Panc1 (cell line): ENCODE measurements at regions of chr12 and their contacts with region 1.

Region 1: GRCh38 chr12:124539084-124540041 is 28.0 kb downstream of the NCOR2 start:
- DNase-seq: no peak
- ATAC-seq: peak; percentile 5
- H3K4me3 ChIP-seq: no peak overlapping the region
- H3K27ac ChIP-seq: peak overlapping the region; percentile 94
- H3K4me1 ChIP-seq: peaks cover 81% of the 10 kb centered on the region
- H3K27me3 ChIP-seq: no peaks in the 10 kb centered on the region
- CTCF ChIP-seq: no peak

Region 2: DNA sequence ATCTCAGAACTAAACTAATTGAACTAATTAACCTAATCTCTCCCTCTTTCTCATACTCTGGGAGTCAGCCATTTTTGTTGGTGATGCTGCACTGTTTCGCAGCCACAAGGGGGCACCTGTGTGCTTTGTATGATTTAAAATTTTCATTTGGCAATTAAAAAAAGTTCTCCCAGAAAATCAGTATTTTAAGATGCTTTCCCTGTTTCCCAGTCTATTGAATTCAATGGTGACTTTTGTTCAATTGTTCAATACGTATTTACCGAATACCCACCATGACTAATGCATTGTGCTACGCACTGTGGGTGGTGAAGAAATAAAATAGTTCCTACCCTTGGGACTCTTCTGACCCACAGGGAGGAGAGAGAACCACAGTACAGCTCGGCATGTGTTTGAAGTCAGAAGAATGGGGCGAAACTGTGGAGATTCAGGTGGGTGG is 502.7 kb before region 1 on chr12:
- CTCF ChIA-PET with region 1: interaction called, 12 read pairs
- POLR2A ChIA-PET with region 1: no interaction called
- in situ Hi-C with region 1: no loop called
- intact Hi-C with region 1: no loop called
- DNase-seq: peak; percentile 24
- ATAC-seq: peak; percentile 79
- H3K4me3 ChIP-seq: no peak overlapping the region
- H3K27ac ChIP-seq: peak overlapping the region; percentile 60
- H3K4me1 ChIP-seq: peaks cover 4% of the 10 kb centered on the region
- H3K27me3 ChIP-seq: no peaks in the 10 kb centered on the region
- CTCF ChIP-seq: peak; percentile 90

Region 3: GRCh38 chr12:124551268-124552144 is 12.1 kb after region 1 on chr12:
- CTCF ChIA-PET with region 1: interaction called, 5 read pairs
- POLR2A ChIA-PET with region 1: interaction called, 10 read pairs
- in situ Hi-C with region 1: no loop called
- intact Hi-C with region 1: no loop called
- DNase-seq: no peak
- ATAC-seq: peak; percentile 42; the same call in 1 of the 2 replicates
- H3K4me3 ChIP-seq: peak overlapping the region in 1 of 2 experiments; percentile 21; a peak in 2 of 4 replicates
- H3K27ac ChIP-seq: peak overlapping the region; percentile 98
- H3K4me1 ChIP-seq: peaks cover 98% of the 10 kb centered on the region
- H3K27me3 ChIP-seq: no peaks in the 10 kb centered on the region
- CTCF ChIP-seq: no peak

Region 4: DNA sequence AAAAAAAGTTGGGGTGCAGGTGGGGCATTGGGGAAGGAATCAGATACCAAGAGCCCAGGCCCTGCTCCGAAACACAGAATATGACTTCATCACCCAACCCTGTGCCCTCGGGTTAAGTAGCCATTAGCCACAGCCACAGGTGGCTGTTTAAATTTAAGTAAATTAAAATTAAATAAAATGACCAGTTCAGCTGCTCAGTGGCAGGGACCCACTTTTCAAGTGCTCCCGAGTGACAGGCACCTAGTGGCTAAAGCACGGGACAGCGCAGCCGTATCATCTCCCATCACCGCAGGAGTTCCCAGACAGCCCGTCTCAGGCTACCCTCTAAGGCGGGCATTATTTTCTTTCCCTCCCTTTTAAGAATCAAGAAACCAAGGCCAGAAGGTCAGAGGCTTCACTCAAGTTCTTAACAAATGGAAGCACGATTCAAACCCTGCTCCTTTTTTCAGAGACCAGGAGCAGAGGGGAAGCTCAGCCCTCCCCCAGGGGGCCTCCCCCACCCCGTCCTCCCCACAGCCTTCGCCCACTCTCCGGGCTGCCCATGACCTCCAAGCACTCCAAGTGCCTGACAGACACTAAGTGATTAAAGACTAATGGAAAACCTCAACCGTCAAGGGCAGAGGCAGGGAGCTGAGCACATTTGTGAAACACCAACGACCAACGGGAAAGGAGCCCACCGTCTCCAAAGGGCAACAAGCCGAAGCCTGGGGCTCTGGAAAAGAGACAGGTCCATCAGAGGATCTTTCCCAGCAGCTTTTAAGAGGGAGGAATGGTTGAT is 22.8 kb after region 1 on chr12:
- CTCF ChIA-PET with region 1: no interaction called
- POLR2A ChIA-PET with region 1: interaction called, 17 read pairs
- in situ Hi-C with region 1: no loop called
- intact Hi-C with region 1: no loop called
- DNase-seq: no peak
- ATAC-seq: no peak
- H3K4me3 ChIP-seq: no peak overlapping the region
- H3K27ac ChIP-seq: peak overlapping the region; percentile 80
- H3K4me1 ChIP-seq: peaks cover 67% of the 10 kb centered on the region
- H3K27me3 ChIP-seq: no peaks in the 10 kb centered on the region
- CTCF ChIP-seq: no peak

Region 5: DNA sequence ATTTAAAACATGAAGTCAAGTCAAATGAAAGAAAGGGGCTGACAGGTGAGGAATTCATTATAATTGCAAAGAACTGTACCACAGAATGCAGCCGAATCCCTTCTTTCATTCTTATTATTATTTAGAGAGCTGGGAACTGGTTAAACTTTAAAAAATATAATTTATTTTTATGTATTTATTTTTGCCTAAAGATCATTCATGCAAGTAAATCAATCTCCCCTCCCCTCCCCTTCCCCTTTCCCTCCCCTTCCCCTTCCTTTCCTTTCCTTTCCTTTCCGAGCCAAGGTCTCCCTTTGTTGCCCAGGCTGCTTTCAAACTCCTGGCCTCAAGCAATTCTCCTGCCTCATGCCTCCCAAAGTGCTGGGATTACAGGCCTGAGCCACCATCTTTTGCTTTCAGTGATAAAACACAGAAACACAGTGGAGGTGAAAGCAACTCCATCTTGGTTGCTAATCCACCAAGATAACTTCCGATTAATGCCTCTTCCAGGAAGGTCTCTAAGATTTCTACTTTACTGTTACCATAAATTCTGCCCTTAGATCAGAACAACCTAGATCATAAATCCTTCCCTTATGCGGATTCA is 381.1 kb after region 1 on chr12:
- CTCF ChIA-PET with region 1: no interaction called
- POLR2A ChIA-PET with region 1: interaction called, 13 read pairs
- in situ Hi-C with region 1: no loop called
- intact Hi-C with region 1: no loop called
- DNase-seq: no peak
- ATAC-seq: no peak
- H3K4me3 ChIP-seq: peak overlapping the region; percentile 49 to 62
- H3K27ac ChIP-seq: peak overlapping the region; percentile 100
- H3K4me1 ChIP-seq: peaks cover 61% of the 10 kb centered on the region
- H3K27me3 ChIP-seq: no peaks in the 10 kb centered on the region
- CTCF ChIP-seq: no peak

Region 6: DNA sequence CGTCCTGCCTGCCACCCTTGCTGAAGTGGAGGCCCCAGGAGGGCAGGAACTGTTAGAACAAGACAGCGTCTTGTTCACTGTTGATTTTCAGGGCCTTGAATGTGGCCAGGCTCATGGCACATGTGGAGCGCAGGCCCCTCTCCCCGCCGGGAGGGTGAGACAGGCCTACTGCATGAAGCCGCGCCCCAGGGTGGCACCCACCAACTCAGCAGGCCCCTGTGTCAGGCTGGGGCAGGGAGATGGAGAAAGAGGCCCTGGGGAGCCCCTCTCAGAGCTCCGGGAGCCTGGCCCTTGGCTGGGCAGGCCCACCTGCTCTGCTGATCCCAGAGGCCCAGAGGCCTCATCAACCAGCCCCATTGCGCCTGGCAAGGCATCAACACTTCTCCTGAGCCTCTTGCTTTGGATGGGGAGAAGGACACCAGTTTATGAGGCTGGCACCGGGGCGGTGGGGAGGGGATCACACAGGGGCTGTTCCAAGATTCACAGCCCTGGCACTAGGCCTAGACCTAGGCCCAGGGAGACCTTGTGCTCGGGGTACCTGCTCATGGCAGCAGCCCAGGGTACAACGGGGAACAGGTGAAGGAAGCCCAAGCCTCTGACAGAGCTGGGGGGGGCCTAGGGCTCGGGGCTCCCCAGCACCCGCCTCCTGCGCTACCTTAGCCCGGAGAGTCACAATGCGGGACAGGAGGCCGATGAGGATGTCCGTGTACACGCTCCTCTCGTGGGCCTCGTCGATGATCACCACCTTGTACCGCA is 431.5 kb after region 1 on chr12:
- CTCF ChIA-PET with region 1: no interaction called
- POLR2A ChIA-PET with region 1: no interaction called
- in situ Hi-C with region 1: no loop called
- intact Hi-C with region 1: no loop called
- DNase-seq: no peak
- ATAC-seq: no peak
- H3K4me3 ChIP-seq: no peak overlapping the region
- H3K27ac ChIP-seq: no peak overlapping the region
- H3K4me1 ChIP-seq: no peaks in the 10 kb centered on the region
- H3K27me3 ChIP-seq: no peaks in the 10 kb centered on the region
- CTCF ChIP-seq: no peak